ENCODE measurements at regions of chr14 and their contacts with region 1.

Region 1: DNA sequence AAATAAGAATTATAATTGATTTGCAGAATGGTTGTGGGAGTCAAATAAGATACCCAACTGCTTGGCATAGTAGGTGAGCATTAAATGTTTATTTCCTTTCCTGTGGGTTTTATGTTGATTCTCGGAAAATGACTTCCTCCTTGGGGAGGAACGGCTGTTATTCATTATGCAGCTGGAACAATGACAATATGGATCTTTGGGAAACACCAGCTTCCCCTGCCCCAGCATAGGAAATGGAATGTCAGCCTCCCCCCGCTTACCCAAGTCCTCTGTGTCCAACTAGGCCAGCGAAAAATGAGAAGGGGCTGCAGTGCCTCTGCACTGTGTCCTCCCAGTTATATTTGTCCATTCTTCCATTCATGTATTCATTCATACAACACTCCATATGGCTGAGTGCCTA is 11.7 kb upstream of the CCDC177 start:
- DNase-seq: no peak
- H3K4me3 ChIP-seq: no peak overlapping the region
- H3K27me3 ChIP-seq: no peaks in the 10 kb centered on the region
- CTCF ChIP-seq: no peak

Region 2: GRCh38 chr14:69153131-69153872 is 433.1 kb before region 1 on chr14:
- CTCF ChIA-PET with region 1: no interaction called
- POLR2A ChIA-PET with region 1: no interaction called
- DNase-seq: peak; percentile 67
- H3K4me3 ChIP-seq: peak overlapping the region; percentile 81
- H3K27me3 ChIP-seq: no peaks in the 10 kb centered on the region
- CTCF ChIP-seq: no peak

Region 3: DNA sequence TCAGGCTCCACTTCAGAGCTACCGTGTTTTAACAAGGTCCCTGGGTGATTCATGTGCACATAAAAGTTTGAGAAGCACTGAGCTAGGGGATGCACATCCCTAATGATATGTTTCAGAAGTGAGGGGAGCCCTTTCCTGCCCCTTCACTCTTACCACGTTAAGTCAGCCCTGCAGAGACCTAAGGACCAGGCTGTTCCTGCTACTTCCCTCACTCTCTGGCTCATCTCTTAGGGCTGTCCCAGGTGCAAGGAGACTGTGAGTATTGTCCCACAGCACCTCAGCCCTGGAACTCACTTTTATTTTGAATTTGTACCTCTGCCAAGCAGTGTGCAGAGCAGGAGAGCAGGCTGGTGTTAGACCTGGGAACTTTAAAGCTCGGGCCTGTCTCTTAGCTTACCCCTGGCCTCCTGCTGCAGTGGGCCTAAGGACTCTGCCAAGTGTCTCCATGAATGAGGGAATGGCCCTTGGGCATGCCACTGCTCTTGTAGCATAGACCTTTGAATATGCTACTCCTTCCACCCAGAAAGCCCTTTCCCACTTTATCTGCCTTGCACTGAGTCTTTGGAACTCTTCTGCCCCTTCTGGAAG is 14.0 kb after region 1 on chr14:
- CTCF ChIA-PET with region 1: interaction called, 29 read pairs
- POLR2A ChIA-PET with region 1: no interaction called
- DNase-seq: no peak
- H3K4me3 ChIP-seq: no peak overlapping the region
- H3K27me3 ChIP-seq: no peaks in the 10 kb centered on the region; the same call in 1 of the 2 replicates
- CTCF ChIP-seq: no peak

Region 4: DNA sequence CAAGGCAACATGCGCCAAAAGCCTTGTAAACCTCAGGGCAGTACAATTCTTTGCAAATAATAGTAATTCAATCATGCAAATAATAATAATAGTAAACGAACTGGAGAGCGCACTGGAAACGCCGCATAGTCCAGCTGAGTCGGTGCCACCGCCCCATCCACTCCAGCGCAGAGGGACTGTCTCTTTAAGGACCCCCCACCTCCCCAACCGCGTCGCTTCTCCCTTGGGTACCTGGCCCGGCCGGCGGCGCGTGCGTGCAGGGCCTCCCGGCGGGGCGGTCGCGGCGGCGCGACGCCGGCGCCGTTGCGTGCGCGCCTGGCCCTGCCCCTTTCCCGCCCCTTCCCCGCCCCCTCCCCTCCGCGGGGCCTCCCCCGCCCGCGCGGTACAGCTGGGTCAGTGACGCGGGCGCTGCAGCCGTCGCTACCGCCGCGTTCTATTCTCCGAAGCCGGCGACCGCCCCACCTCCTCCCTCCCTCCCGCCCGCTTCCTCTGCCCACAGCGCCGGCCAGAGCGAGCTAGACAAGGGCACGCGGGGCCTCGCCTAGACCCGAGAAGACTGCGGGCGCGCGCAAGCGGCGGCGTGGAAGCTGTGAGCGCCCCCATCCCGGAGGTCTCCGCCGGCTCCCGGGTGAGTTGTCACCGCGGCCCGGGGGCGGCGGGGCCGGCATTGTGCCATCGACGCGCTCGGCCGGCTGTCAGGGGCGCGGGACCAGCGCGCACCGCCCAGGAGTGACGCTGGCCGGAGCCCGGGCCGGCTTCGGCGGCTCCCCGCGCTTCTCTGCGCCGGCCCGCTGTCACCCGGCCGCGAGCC is 25.0 kb after region 1 on chr14 and contains the start of gene SUSD6:
- CTCF ChIA-PET with region 1: interaction called, 18 read pairs
- POLR2A ChIA-PET with region 1: no interaction called
- DNase-seq: no peak
- H3K4me3 ChIP-seq: peak within 1 kb of the TSS; percentile 75
- H3K27me3 ChIP-seq: no peaks in the 10 kb centered on the region
- CTCF ChIP-seq: no peak
- polyA plus RNA-seq, gene SUSD6: 15.9 and 20.3 TPM in 2 replicates

Region 5: DNA sequence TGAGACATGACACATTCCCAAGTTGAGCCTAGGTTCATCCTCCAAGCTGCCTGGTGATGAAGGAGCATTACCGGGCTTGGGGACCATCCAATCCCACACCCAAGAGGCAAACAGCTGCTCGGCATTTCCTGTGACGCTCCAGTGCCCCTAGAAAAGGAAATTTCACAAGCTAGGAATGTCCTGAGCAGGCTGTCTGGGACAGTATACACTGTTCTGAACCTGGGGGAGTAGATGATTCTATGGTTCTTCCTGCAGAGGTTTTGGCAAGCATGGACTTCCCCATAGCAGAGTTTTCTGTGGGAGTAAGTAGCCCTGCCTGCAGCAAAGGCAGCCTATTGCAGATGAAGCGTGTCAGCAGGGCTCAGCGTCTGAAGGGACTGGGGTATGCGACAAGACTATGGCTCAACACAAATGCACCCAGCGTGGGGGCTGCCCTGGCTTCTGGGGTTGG is 133.1 kb after region 1 on chr14:
- CTCF ChIA-PET with region 1: interaction called, 54 read pairs
- POLR2A ChIA-PET with region 1: no interaction called
- DNase-seq: peak; percentile 74
- H3K4me3 ChIP-seq: no peak overlapping the region
- H3K27me3 ChIP-seq: no peaks in the 10 kb centered on the region
- CTCF ChIP-seq: no peak